Mammary epithelial cell (primary cell): ENCODE measurements at regions of chr1 and their contacts with region 1.

Region 1: DNA sequence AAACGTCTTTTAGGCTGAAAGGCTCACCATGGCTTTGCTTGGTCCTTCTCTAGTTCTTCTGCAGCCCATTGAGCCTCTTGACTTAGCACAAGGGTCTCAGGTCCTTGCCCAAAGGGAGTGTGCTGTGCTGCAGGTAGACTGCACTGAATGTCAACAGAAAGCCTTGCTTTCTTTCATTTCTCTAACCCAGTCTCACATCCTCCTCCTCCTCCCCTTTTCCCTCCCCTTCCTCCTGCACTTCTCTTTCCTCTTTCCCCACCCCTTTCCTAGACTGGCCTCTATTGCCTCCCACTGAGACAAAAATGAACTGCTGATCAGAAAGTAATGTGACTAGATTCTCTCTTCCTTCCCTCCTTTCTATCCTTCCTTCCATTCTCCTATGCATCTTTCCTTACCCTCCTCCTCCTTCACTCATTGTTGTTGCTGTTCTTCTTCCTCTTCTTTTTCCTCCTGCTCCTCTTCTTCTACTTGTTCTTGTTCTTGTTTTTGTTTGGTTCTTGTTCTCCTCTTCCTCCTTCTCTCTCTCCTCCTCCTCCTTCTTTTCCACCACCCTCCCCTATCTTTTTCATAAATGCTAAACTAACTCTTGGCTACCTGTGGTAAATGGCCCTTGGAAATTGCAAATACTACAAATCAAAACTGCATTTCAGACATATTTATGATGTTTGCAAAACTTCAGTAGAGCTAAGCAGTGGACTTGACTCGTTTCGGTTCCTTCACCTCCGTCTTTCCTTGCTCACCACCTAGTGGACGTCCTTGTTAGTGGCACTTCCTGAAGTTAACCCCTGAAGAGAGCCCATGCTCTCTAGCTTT is at the start of gene SELL:
- DNase-seq: peak; percentile 61
- H3K4me3 ChIP-seq: peak within 1 kb of the TSS; percentile 22 to 51 (median 46)
- H3K27ac ChIP-seq: no peak within 1 kb of the TSS
- H3K4me1 ChIP-seq: no peaks in the 10 kb centered on the region
- H3K27me3 ChIP-seq: peaks cover 3% of the 10 kb centered on the region
- CTCF ChIP-seq: peak; percentile 93 to 94
- total RNA-seq, gene SELL: 0.17 TPM in 1 of 2 donors, not detected in the other

Region 2: DNA sequence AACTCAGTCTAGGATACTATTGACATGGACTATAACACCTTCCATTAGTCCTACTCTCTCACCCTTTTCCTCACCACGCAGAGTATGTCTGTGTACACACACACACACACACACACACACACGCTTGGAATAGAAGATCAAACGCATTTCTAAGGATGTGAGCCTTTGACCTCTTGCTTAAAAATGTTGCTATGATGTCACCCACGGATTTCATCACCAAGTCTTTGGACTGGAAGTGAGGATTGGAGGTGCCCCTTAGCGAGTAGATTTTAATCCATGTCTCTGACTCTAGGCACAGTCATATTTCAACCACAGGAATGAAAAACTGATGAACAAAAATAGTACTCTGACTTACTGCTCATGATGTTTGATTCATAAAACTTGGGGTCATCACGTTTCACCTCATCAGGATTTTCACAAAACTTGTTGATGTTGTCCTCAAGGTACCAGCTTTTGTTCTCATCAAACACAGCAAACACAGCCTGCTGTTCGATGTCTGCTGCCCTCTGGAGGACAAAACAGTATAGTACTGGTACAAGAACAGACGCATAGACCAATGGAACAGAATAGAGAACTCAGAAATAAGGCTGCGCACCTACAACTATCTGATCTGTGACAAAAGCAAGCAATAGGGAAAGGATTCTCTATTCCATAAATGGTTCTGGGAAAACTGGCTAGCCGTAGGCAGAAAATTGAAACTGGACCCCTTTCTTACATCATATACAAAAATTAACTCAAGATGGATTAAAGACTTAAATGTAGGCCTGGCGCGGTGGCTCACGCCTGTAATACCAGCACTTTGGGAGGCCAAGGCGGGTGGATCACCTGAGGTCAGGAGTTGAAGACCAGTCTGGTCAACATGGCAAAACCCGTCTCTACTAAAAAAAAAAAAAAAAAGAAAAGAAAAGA is 165.3 kb before region 1 on chr1:
- CTCF ChIA-PET with region 1: interaction called, 5 read pairs
- dilution Hi-C with region 1: no loop called
- in situ Hi-C with region 1: loop called in 1 of 2 experiments (anchors 25 kb)
- intact Hi-C with region 1: loop called (anchors 1 kb)
- DNase-seq: peak; percentile 59
- H3K4me3 ChIP-seq: no peak overlapping the region
- H3K27ac ChIP-seq: no peak overlapping the region
- H3K4me1 ChIP-seq: no peaks in the 10 kb centered on the region
- H3K27me3 ChIP-seq: no peaks in the 10 kb centered on the region
- CTCF ChIP-seq: peak; percentile 76 to 85

Region 3: GRCh38 chr1:169586395-169587255 is 125.0 kb before region 1 on chr1 and contains the start of gene F5:
- CTCF ChIA-PET with region 1: no interaction called
- dilution Hi-C with region 1: no loop called
- in situ Hi-C with region 1: no loop called
- intact Hi-C with region 1: loop called (anchors 1 kb)
- DNase-seq: peak; percentile 64
- H3K4me3 ChIP-seq: no peak within 1 kb of the TSS
- H3K27ac ChIP-seq: no peak within 1 kb of the TSS
- H3K4me1 ChIP-seq: peaks cover 14% of the 10 kb centered on the region
- H3K27me3 ChIP-seq: no peaks in the 10 kb centered on the region
- CTCF ChIP-seq: peak; percentile 39 to 74
- total RNA-seq, gene F5: not detected

Region 4: DNA sequence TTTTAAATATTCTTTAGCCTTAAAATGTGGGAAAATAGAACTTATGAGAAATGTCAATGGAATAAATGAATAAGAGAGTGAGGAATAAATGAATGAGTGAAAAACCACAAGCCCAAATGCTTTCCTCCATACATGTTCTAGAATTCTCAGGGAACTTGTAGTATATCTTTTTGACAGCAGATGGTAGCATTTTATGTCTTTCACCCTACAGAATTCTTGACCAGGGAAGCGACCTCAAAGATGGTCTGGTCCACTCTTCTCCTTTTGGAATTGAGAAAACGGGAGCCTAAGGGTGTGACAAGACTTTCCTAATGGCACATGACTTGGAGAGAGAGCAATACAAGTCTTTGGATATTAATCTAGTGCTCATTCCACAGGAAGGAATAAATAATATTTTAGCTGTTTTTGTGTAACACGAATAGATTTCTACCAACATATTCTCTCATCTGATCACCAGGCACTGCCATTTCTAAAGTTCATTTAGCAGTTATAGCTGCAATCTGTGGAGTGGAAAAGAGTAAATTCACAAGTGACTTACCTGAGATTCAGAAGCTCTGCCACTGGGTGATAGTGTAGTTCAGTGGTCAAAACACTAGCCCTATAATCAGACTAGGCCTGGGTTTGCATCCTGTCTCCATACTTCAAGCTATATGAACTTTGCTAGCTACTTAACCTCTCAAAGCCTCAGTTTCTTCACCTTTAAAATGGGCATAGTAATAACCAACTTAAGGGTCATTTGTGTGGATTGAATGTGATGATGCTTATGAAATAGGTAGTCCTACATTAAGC is 110.4 kb before region 1 on chr1:
- CTCF ChIA-PET with region 1: interaction called, 8 read pairs
- dilution Hi-C with region 1: no loop called
- in situ Hi-C with region 1: loop called in 1 of 2 experiments (anchors 10 kb)
- intact Hi-C with region 1: loop called (anchors 1 kb)
- DNase-seq: peak; percentile 17
- H3K4me3 ChIP-seq: no peak overlapping the region
- H3K27ac ChIP-seq: no peak overlapping the region
- H3K4me1 ChIP-seq: no peaks in the 10 kb centered on the region
- H3K27me3 ChIP-seq: no peaks in the 10 kb centered on the region
- CTCF ChIP-seq: peak; percentile 25 to 46

Region 5: DNA sequence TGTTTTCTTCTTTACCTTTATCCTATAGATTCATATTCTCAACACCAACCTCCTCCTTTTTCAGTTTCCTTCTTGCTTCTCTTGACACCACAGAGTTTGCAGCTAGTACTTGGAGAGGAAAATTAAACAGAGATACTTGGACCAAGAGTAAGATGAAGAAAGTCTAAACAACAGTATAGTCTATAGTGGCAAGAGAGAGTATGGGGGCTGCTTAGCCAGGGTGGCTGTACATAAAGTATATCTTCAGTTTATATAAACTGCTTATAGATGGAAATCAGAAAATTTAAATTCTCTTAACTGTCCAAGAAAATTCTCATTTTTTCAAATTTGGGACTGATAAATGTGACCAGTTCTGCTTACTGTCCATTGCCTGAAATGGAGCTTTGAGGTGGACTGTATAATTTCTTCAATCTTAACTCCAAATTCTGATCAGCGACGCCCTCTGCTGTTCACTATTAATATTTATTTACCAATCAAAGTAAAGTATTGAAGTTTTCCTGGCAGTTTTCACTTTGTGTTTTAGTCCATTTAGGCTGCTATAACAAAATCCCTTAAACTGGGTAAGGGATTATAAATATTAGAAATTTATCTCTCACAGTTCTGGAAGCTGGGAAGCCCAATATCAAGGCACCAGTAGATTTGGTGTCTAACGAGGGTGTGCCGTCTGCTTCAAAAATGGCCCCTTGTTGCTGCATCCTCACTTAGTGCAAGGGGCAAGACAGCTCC is 97.9 kb after region 1 on chr1:
- CTCF ChIA-PET with region 1: interaction called, 5 read pairs
- dilution Hi-C with region 1: no loop called
- in situ Hi-C with region 1: no loop called
- intact Hi-C with region 1: loop called (anchors 5 kb)
- DNase-seq: peak; percentile 9
- H3K4me3 ChIP-seq: no peak overlapping the region
- H3K27ac ChIP-seq: no peak overlapping the region
- H3K4me1 ChIP-seq: no peaks in the 10 kb centered on the region
- H3K27me3 ChIP-seq: no peaks in the 10 kb centered on the region
- CTCF ChIP-seq: peak; percentile 45 to 55